BJ (cell line): ENCODE measurements at regions of chr11 and their contacts with region 1.

Region 1: GRCh38 chr11:58629857-58630256 is 7.4 kb downstream of the CNTF start:
- DNase-seq: no peak
- H3K4me3 ChIP-seq: no peak overlapping the region
- H3K27me3 ChIP-seq: no peaks in the 10 kb centered on the region
- CTCF ChIP-seq: peak; percentile 77

Region 2: GRCh38 chr11:58524232-58525036 is 105.4 kb before region 1 on chr11:
- CTCF ChIA-PET with region 1: interaction called, 11 read pairs
- POLR2A ChIA-PET with region 1: no interaction called
- DNase-seq: peak; percentile 53
- H3K4me3 ChIP-seq: no peak overlapping the region
- H3K27me3 ChIP-seq: no peaks in the 10 kb centered on the region
- CTCF ChIP-seq: peak; percentile 86

Region 3: GRCh38 chr11:58567889-58568512 is 61.9 kb before region 1 on chr11:
- CTCF ChIA-PET with region 1: interaction called, 28 read pairs
- POLR2A ChIA-PET with region 1: no interaction called
- DNase-seq: no peak
- H3K4me3 ChIP-seq: no peak overlapping the region
- H3K27me3 ChIP-seq: no peaks in the 10 kb centered on the region
- CTCF ChIP-seq: peak; percentile 85

Region 4: DNA sequence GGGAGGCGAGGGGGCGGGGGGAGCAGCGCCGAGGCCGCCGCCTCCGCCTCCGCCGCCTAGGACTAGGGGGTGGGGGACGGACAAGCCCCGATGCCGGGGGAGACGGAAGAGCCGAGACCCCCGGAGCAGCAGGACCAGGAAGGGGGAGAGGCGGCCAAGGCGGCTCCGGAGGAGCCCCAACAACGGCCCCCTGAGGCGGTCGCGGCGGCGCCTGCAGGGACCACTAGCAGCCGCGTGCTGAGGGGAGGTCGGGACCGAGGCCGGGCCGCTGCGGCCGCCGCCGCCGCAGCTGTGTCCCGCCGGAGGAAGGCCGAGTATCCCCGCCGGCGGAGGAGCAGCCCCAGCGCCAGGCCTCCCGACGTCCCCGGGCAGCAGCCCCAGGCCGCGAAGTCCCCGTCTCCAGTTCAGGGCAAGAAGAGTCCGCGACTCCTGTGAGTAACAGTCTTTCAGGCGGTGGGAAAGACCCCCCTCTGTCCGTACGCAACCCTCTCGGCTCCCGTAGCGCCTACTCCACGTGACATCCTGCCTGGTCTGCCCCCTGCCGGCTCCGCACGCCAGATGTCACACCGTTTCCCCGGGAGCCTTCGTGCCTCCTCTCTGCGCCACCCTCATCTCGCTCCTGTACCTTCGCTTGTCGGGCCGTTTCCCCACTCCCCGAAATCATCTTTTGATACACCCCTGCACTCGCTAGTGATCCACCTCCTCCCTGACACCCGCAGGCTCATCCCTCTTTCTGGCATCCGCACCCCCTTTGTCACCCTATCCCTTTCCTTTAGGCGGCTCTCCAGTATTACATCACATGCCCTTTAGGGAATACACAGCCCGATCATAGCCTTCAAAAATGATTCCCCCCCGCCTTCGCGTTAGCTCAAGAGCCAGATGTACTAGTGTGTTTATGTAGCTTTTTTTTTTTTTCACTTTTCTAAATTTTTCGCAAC is 50.4 kb before region 1 on chr11:
- CTCF ChIA-PET with region 1: interaction called, 45 read pairs
- POLR2A ChIA-PET with region 1: interaction called, 3 read pairs
- DNase-seq: peak; percentile 34
- H3K4me3 ChIP-seq: peak overlapping the region; percentile 95
- H3K27me3 ChIP-seq: no peaks in the 10 kb centered on the region
- CTCF ChIP-seq: peak; percentile 88

Region 5: DNA sequence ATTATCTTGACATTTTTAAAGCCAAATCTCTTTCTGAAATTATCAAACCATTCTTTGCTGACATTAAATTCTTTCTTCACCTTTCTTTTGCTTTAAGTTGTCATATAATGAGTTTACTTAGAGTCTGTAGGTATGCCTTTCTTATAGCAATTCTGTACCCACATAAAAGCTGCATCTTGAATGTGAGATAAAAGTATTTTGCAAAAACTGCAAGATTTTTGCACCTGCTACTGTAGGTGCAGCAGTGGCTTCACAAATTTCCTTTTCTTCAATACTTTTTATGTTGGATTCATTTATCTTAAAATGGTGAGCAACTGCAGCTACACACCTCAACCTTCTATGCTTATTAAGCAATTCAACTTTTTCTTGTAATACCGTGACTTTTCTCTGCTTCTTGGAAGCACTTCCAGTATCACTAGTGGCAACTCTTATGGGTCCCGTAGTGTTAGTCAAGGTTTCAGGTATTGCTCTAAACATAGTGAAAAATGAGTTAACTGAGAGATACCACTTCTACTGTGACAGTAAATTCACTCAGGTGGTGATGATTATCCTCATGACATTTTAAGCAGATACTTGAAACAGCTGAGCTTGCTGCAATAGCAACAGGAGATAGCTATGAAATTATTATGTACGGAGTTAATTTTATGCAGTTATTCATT is 32.2 kb before region 1 on chr11:
- CTCF ChIA-PET with region 1: interaction called, 10 read pairs
- POLR2A ChIA-PET with region 1: no interaction called
- DNase-seq: no peak
- H3K4me3 ChIP-seq: no peak overlapping the region
- H3K27me3 ChIP-seq: no peaks in the 10 kb centered on the region
- CTCF ChIP-seq: no peak

Region 6: GRCh38 chr11:58616594-58616993 is 13.3 kb before region 1 on chr11:
- CTCF ChIA-PET with region 1: interaction called, 13 read pairs
- POLR2A ChIA-PET with region 1: no interaction called
- DNase-seq: peak; percentile 71
- H3K4me3 ChIP-seq: no peak overlapping the region
- H3K27me3 ChIP-seq: no peaks in the 10 kb centered on the region
- CTCF ChIP-seq: no peak

Region 7: DNA sequence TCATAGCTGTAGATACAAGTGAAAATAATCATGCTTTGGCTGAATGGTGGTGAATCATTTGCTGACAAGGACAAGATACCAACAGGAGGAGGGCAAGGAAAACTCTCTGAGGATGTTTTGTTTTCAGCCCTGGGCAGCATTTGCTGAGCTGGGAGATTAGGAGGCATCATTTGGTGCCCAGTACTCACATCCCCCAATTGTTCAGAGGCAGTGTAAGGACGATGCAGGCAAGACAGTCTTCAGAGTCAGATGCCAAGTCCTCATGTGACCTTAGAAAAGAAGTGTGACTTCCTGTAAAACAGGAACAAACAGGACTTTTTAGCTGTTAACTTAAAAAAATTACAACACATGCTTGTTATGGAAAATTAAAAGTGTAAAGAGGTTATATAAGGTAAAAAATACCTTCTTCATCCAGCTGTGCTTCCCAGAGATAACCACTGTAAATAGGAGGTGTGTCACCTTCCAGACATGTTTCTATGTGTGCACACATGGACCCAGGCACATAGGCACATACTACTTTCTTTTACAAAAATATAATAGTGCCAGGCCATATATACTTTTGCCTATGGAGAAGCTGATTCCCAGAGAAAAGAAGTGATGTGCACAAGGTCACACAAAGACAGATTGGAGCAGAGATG is 10.6 kb after region 1 on chr11:
- CTCF ChIA-PET with region 1: interaction called, 28 read pairs
- POLR2A ChIA-PET with region 1: no interaction called
- DNase-seq: no peak
- H3K4me3 ChIP-seq: no peak overlapping the region
- H3K27me3 ChIP-seq: no peaks in the 10 kb centered on the region; the same call in 1 of the 2 replicates
- CTCF ChIP-seq: no peak

Region 8: DNA sequence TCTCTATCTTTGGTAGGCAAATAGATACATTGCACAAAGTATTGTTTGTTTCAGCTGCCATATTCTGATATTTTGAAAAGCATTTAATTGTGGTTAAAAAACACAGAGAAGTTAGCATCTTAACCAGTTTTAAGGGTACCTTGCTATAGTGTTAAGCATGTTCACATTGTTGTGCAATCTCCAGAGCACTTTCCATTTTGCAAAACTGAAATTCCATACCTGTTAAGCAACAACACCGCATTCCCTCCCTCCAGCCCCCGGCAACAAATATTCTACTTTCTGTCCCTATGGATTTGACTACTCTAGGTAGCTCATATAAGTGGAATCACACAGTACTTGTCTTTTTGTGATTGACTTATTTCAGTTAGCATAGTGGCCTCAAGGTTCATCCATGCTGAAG is 26.5 kb after region 1 on chr11:
- CTCF ChIA-PET with region 1: no interaction called
- POLR2A ChIA-PET with region 1: no interaction called
- DNase-seq: no peak
- H3K4me3 ChIP-seq: no peak overlapping the region
- H3K27me3 ChIP-seq: no peaks in the 10 kb centered on the region
- CTCF ChIP-seq: no peak

Region 9: DNA sequence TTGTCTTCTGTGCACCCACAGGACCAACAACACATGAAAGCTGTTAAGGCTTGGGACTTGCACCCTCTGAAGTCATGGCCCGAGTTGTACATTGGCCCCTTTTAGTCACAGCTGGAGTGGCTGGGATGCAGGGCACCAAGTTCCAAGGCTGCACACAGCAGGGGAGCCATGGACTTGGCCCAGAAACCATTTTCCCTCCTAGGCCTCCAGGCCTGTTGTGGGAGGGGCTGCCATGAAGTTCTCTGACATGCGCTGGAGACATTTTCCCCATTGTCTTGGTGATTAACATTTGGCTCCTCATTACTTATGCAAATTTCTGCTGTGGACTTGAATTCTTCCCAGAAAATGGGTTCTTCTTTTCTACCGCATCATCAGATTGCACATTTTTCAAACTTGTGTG is 150.7 kb after region 1 on chr11:
- CTCF ChIA-PET with region 1: no interaction called
- POLR2A ChIA-PET with region 1: no interaction called
- DNase-seq: no peak
- H3K4me3 ChIP-seq: no peak overlapping the region
- H3K27me3 ChIP-seq: no peaks in the 10 kb centered on the region
- CTCF ChIP-seq: no peak